ENCODE measurements at regions of chr17 and their contacts with region 1.

Region 1: DNA sequence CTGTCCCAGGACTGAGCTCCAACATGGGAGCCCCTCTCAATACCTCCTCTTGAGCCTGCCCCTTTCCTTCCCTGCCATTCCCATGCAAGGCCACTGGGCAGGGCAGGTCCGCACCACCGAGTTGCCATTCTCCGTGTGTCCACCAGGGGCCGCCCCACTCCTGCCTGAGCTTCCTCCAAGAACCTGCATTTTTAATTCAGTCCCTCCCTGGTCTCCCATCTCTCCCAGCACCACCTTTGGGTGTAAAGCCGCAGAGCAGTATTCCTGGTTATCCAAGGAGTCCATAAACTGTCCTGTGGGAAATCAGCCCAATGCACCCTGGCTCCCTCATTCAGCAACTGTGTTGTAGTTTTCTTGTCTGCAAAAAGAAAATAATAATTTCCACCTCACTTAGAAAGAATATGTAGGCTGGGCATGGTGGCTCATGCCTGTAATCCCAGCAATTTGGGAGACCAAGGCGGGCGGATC is 15.9 kb upstream of the ANKRD40CL start:
- DNase-seq: peak; percentile 97

Region 2: GRCh38 chr17:50765454-50766221 is 17.6 kb before region 1 on chr17:
- CTCF ChIA-PET with region 1: interaction called, 34 read pairs
- POLR2A ChIA-PET with region 1: interaction called, 5 read pairs
- DNase-seq: no peak

Region 3: DNA sequence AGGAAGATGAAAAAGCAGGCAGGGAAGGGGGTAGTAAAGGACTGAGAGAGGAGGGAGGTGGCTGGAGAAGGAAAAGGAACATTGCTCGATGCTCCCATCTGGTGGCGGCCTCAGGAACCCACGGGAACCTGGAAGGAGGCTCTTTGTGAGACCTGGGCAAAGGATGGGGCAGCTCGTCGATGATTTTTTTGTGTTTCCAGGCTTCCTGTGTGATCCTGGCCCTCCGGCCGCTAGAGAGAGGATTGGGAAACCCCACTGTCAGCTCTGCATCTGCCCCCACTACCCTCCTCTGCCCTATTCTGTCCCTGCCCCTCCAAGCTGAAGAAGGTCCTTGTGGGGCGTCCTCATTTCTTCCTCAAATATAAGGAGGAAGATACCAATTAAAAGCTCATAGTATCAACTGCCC is 58.7 kb after region 1 on chr17:
- CTCF ChIA-PET with region 1: interaction called, 68 read pairs
- POLR2A ChIA-PET with region 1: interaction called, 3 read pairs
- DNase-seq: peak; percentile 87